Naive thymus-derived CD4-positive, alpha-beta T cell (primary cell): ENCODE measurements at regions of chr5 and their contacts with region 1.

Region 1: GRCh38 chr5:14664302-14665100 is at the start of gene OTULIN:
- DNase-seq: peak; percentile 73 to 92 (median 75)
- ATAC-seq: peak; percentile 85
- H3K4me3 ChIP-seq: peak within 1 kb of the TSS; percentile 86
- H3K4me3 Mint-ChIP-seq: peak within 1 kb of the TSS; percentile 87 to 97 (median 96)
- H3K27ac ChIP-seq: peak within 1 kb of the TSS; percentile 79
- H3K27ac Mint-ChIP-seq: peak within 1 kb of the TSS; percentile 89 to 98 (median 96)
- H3K4me1 ChIP-seq: peaks cover 25 to 38% of the 10 kb centered on the region in 2 donors
- H3K4me1 Mint-ChIP-seq: peaks cover 30 to 73% (median 67%) of the 10 kb centered on the region in 7 donors
- H3K27me3 ChIP-seq: no peaks in the 10 kb centered on the region
- H3K27me3 Mint-ChIP-seq: no peaks in the 10 kb centered on the region
- total RNA-seq, gene OTULIN: 48.3 to 66.9 (median 58.2) TPM

Region 2: GRCh38 chr5:14364576-14365472 is 299.7 kb before region 1 on chr5:
- CTCF ChIA-PET with region 1: no interaction called
- POLR2A ChIA-PET with region 1: interaction called, 7 read pairs
- intact Hi-C with region 1: loop called in 1 of 2 experiments (anchors 1 kb)
- DNase-seq: no peak
- ATAC-seq: no peak
- H3K4me3 ChIP-seq: no peak overlapping the region
- H3K4me3 Mint-ChIP-seq: peak overlapping the region in 1 of 10 donors; percentile 48
- H3K27ac ChIP-seq: no peak overlapping the region
- H3K27ac Mint-ChIP-seq: peak overlapping the region in 4 of 9 donors; percentile 13 to 73 (median 46)
- H3K4me1 ChIP-seq: peaks cover 9 to 12% of the 10 kb centered on the region in 2 donors
- H3K4me1 Mint-ChIP-seq: peaks cover 17 to 55% (median 28%) of the 10 kb centered on the region in 7 donors
- H3K27me3 ChIP-seq: no peaks in the 10 kb centered on the region
- H3K27me3 Mint-ChIP-seq: no peaks in the 10 kb centered on the region

Region 3: DNA sequence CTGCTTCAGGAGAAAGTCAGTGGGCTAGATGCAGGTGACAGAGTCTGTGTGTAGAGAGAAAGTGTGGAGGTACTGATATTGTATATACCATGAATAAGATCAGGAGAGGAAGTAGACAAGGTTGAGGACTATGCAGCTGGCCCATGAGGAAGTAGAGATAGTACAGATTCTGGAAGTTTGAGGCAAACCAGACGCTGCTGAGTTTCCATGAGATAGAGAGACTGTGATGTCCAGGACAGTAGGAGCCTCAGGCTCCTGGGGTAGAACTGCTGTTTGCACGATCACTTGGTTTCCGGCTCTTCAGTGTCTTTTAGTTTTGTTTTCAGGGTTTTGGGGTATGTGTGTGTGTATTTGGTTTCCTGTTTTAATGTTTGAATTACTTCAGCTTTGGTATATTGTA is 69.3 kb before region 1 on chr5:
- CTCF ChIA-PET with region 1: interaction called, 3 read pairs
- POLR2A ChIA-PET with region 1: no interaction called
- intact Hi-C with region 1: loop called (anchors 1 to 2 kb)
- DNase-seq: peak in 8 of 9 donors; percentile 29 to 69 (median 58)
- ATAC-seq: peak; percentile 72
- H3K4me3 ChIP-seq: peak overlapping the region; percentile 62
- H3K4me3 Mint-ChIP-seq: peak overlapping the region; percentile 76 to 86 (median 84)
- H3K27ac ChIP-seq: peak overlapping the region; percentile 70
- H3K27ac Mint-ChIP-seq: peak overlapping the region; percentile 94 to 99 (median 97)
- H3K4me1 ChIP-seq: peaks cover 59 to 66% of the 10 kb centered on the region in 2 donors
- H3K4me1 Mint-ChIP-seq: peaks cover 72 to 92% (median 85%) of the 10 kb centered on the region in 7 donors
- H3K27me3 ChIP-seq: no peaks in the 10 kb centered on the region
- H3K27me3 Mint-ChIP-seq: no peaks in the 10 kb centered on the region

Region 4: DNA sequence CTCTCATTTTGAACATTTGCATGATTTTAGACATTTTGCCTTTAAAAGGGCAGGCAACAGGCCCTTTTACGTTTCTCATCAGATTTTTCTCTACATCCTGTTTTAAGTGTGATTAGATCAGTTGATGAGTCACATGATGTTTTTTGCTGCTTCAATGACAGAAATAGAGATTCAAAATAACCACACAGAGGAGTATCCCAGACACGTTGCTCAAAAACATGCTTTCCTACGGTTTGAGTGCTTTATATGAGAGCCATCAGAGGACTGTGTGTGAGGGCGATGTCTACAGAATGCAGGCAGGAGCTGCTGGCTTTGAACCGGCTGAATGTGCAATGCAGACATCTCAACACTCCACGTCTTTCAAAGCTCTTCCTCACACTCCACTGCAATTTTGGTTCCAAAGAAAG is 42.1 kb after region 1 on chr5:
- CTCF ChIA-PET with region 1: no interaction called
- POLR2A ChIA-PET with region 1: interaction called, 3 read pairs
- intact Hi-C with region 1: loop called (anchors 1 to 2 kb)
- DNase-seq: peak in 8 of 9 donors; percentile 33 to 88 (median 84)
- ATAC-seq: peak; percentile 96
- H3K4me3 ChIP-seq: peak overlapping the region; percentile 4
- H3K4me3 Mint-ChIP-seq: peak overlapping the region; percentile 74 to 94 (median 86)
- H3K27ac ChIP-seq: peak overlapping the region; percentile 72
- H3K27ac Mint-ChIP-seq: peak overlapping the region; percentile 96 to 100 (median 99)
- H3K4me1 ChIP-seq: peaks cover 34 to 75% of the 10 kb centered on the region in 2 donors
- H3K4me1 Mint-ChIP-seq: peaks cover 50 to 96% (median 86%) of the 10 kb centered on the region in 7 donors
- H3K27me3 ChIP-seq: no peaks in the 10 kb centered on the region
- H3K27me3 Mint-ChIP-seq: no peaks in the 10 kb centered on the region

Region 5: DNA sequence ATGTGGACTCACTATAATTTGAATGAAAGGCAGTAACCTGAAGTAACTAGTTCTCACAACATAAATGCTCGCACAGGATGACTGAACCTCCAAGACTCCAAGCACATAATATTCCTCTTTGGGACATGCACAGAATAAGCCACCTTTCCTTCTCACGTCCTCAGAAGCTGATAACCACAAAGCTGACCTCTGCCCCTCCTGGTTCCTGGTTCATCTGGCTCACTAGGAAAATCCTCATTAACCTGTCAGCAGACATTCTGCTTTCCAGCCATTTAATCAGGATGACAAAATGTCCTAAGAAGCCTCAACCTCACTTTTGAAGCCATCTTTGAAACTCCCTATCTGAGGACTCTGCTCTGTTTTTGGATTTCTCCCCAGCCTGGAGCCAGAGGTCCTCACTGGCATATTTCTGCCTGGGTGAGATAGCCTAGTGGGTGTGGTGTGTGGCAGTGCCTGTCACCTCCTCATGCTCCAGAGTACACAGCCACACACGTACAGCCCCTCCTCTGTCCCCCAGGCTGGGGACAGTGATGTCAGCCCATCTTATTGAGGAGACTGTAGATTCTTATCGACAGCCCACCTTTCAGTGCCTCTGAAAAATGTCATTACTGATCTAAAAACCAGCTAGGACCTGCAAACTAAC is 196.7 kb after region 1 on chr5:
- CTCF ChIA-PET with region 1: no interaction called
- POLR2A ChIA-PET with region 1: no interaction called
- intact Hi-C with region 1: no loop called
- DNase-seq: no peak
- ATAC-seq: peak; percentile 40
- H3K4me3 ChIP-seq: no peak overlapping the region
- H3K4me3 Mint-ChIP-seq: no peak overlapping the region
- H3K27ac ChIP-seq: no peak overlapping the region
- H3K27ac Mint-ChIP-seq: peak overlapping the region in 3 of 9 donors; percentile 28 to 82 (median 32)
- H3K4me1 ChIP-seq: no peaks in the 10 kb centered on the region
- H3K4me1 Mint-ChIP-seq: peaks cover 8 to 78% (median 74%) of the 10 kb centered on the region in 7 donors
- H3K27me3 ChIP-seq: no peaks in the 10 kb centered on the region
- H3K27me3 Mint-ChIP-seq: no peaks in the 10 kb centered on the region

Region 6: GRCh38 chr5:16465544-16466466 is 1801.3 kb after region 1 on chr5 and contains the start of gene ZNF622:
- CTCF ChIA-PET with region 1: no interaction called
- POLR2A ChIA-PET with region 1: no interaction called
- intact Hi-C with region 1: loop called (anchors 5 to 10 kb)
- DNase-seq: peak; percentile 72 to 89 (median 86)
- ATAC-seq: peak; percentile 96
- H3K4me3 ChIP-seq: peak within 1 kb of the TSS; percentile 88
- H3K4me3 Mint-ChIP-seq: peak within 1 kb of the TSS; percentile 90 to 100 (median 97)
- H3K27ac ChIP-seq: peak within 1 kb of the TSS; percentile 87
- H3K27ac Mint-ChIP-seq: peak within 1 kb of the TSS; percentile 94 to 99 (median 97)
- H3K4me1 ChIP-seq: peaks cover 44 to 55% of the 10 kb centered on the region in 2 donors
- H3K4me1 Mint-ChIP-seq: peaks cover 61 to 98% (median 82%) of the 10 kb centered on the region in 7 donors
- H3K27me3 ChIP-seq: no peaks in the 10 kb centered on the region
- H3K27me3 Mint-ChIP-seq: no peaks in the 10 kb centered on the region
- total RNA-seq, gene ZNF622: 31.8 to 40.7 (median 36.0) TPM